PC-3 (cell line): ENCODE measurements at regions of chrX and their contacts with region 1.

Region 1: GRCh38 chrX:117996918-117997480 is 119.6 kb downstream of the KLHL13 start:
- DNase-seq: peak; percentile 65
- ATAC-seq: peak; percentile 72
- H3K4me3 ChIP-seq: no peak overlapping the region
- H3K27ac ChIP-seq: no peak overlapping the region
- H3K4me1 ChIP-seq: peaks cover 4% of the 10 kb centered on the region
- H3K27me3 ChIP-seq: no peaks in the 10 kb centered on the region
- CTCF ChIP-seq: peak; percentile 80

Region 2: GRCh38 chrX:117919755-117920154 is 77.2 kb before region 1 on chrX:
- CTCF ChIA-PET with region 1: no interaction called
- POLR2A ChIA-PET with region 1: no interaction called
- intact Hi-C with region 1: no loop called
- DNase-seq: no peak
- ATAC-seq: no peak
- H3K4me3 ChIP-seq: no peak overlapping the region
- H3K27ac ChIP-seq: no peak overlapping the region
- H3K4me1 ChIP-seq: no peaks in the 10 kb centered on the region
- H3K27me3 ChIP-seq: no peaks in the 10 kb centered on the region
- CTCF ChIP-seq: no peak

Region 3: GRCh38 chrX:117936168-117936567 is 60.8 kb before region 1 on chrX:
- CTCF ChIA-PET with region 1: no interaction called
- POLR2A ChIA-PET with region 1: no interaction called
- intact Hi-C with region 1: no loop called
- DNase-seq: peak; percentile 62
- ATAC-seq: 0 out of 2 replicates have a peak, but pooled peaks have one; percentile 35
- H3K4me3 ChIP-seq: no peak overlapping the region
- H3K27ac ChIP-seq: no peak overlapping the region
- H3K4me1 ChIP-seq: no peaks in the 10 kb centered on the region
- H3K27me3 ChIP-seq: no peaks in the 10 kb centered on the region
- CTCF ChIP-seq: no peak

Region 4: GRCh38 chrX:118226090-118226428 is 229.1 kb after region 1 on chrX:
- CTCF ChIA-PET with region 1: interaction called, 5 read pairs
- POLR2A ChIA-PET with region 1: no interaction called
- intact Hi-C with region 1: loop called (anchors 1 kb)
- DNase-seq: peak; percentile 45
- ATAC-seq: peak; percentile 74
- H3K4me3 ChIP-seq: peak overlapping the region; percentile 36; the same call in 1 of the 2 replicates
- H3K27ac ChIP-seq: peak overlapping the region; percentile 82
- H3K4me1 ChIP-seq: peaks cover 13% of the 10 kb centered on the region; the same call in 1 of the 2 replicates
- H3K27me3 ChIP-seq: no peaks in the 10 kb centered on the region
- CTCF ChIP-seq: peak; percentile 74

Region 5: DNA sequence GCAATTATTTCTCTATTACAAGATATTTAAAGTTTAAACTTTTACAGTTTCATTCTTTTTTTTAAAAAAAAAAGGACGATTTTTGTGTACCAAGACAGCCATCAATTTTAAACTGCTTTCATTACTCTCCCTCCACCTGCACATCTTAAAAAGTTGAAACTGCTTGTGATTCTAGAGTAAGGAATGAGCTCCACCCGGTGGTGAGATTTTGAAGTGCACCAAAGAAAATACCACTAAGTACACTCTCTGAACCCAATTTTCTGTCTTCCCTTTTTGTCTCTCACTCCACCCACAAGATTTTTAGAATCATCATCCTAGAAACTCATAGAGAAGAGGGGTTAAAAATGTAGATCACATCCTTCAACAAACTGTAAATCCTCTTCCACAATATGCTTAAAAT is 257.6 kb after region 1 on chrX:
- CTCF ChIA-PET with region 1: interaction called, 3 read pairs
- POLR2A ChIA-PET with region 1: no interaction called
- intact Hi-C with region 1: loop called (anchors 1 kb)
- DNase-seq: peak; percentile 76
- ATAC-seq: peak; percentile 45; the same call in 1 of the 2 replicates
- H3K4me3 ChIP-seq: no peak overlapping the region
- H3K27ac ChIP-seq: no peak overlapping the region
- H3K4me1 ChIP-seq: no peaks in the 10 kb centered on the region
- H3K27me3 ChIP-seq: no peaks in the 10 kb centered on the region
- CTCF ChIP-seq: peak; percentile 69

Region 6: DNA sequence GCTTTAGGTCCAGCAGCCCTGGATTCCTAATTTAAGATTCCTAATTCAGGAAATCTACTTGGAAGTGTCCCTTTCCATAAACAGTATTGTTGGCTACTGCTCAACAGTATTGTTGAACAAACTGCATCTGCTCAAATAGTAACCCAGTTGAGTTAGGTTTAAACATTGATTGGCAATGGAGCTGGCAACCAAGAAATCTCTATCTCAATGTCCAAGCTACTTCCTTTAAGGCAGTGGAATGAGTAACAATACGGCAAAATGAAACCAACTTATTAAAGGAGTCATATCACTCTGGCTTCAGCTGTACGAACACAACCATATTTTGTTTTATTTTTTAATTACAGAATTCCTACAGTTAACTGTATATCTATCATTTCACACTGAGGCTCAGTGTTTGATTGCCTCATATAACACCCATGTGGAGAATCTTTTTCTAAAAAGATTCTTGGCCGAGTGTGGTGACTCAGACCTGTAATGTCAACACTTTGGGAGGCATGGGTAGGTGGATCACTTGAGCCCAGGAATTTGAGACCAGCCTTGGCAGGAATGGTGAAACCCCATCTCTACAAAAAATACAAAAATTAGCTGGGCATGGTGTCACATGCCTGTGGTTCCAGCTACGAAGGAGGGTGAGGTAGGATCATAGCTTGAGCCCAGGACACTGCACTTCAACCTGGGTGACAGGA is 658.7 kb after region 1 on chrX:
- CTCF ChIA-PET with region 1: no interaction called
- POLR2A ChIA-PET with region 1: no interaction called
- intact Hi-C with region 1: no loop called
- DNase-seq: peak; percentile 76
- ATAC-seq: peak; percentile 83
- H3K4me3 ChIP-seq: no peak overlapping the region
- H3K27ac ChIP-seq: peak overlapping the region; percentile 38
- H3K4me1 ChIP-seq: peaks cover 34% of the 10 kb centered on the region
- H3K27me3 ChIP-seq: no peaks in the 10 kb centered on the region
- CTCF ChIP-seq: no peak